ENCODE measurements at regions of chr7 and their contacts with region 1.

Region 1: DNA sequence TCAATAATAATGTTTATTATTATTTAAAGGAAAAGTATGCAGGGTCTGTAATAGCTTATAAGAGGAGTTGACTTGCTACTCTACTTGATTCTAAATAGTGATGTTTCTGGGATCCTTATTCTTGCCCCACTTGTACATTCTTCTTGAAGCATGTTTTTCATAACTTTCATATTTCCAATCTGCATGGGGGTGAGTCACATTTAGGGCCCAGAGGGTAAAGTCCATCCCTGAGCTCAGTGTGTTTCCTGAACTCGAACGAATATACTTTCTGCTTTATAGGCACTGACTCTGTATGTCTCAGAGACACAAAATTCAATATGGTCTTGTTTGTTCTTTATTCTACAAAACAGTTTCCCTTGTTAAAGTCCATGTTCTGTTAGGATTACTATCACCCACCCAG is 61.0 kb upstream of the SMIM30 start:
- DNase-seq: no peak
- ATAC-seq: no peak
- H3K4me3 ChIP-seq: no peak overlapping the region
- H3K27ac ChIP-seq: no peak overlapping the region
- H3K4me1 ChIP-seq: no peaks in the 10 kb centered on the region
- H3K27me3 ChIP-seq: no peaks in the 10 kb centered on the region
- CTCF ChIP-seq: no peak

Region 2: GRCh38 chr7:113086431-113086888 is 92.9 kb before region 1 on chr7 and contains the start of gene GPR85:
- intact Hi-C with region 1: no loop called
- DNase-seq: peak; percentile 40 to 64
- ATAC-seq: peak; percentile 90 to 97 (median 92)
- H3K4me3 ChIP-seq: peak within 1 kb of the TSS; percentile 14 to 64 (median 54)
- H3K27ac ChIP-seq: peak within 1 kb of the TSS in 5 of 10 donors; percentile 40 to 61 (median 54)
- H3K4me1 ChIP-seq: peaks cover 0 to 13% (median 0%) of the 10 kb centered on the region in 9 donors
- H3K27me3 ChIP-seq: peaks cover 0 to 39% (median 0%) of the 10 kb centered on the region in 7 donors
- CTCF ChIP-seq: no peak
- total RNA-seq, gene GPR85: 0.50 to 4.5 (median 1.2) TPM

Region 3: GRCh38 chr7:113128028-113128427 is 51.3 kb before region 1 on chr7:
- intact Hi-C with region 1: no loop called
- DNase-seq: no peak
- ATAC-seq: no peak
- H3K4me3 ChIP-seq: no peak overlapping the region
- H3K27ac ChIP-seq: no peak overlapping the region
- H3K4me1 ChIP-seq: no peaks in the 10 kb centered on the region
- H3K27me3 ChIP-seq: no peaks in the 10 kb centered on the region
- CTCF ChIP-seq: no peak

Region 4: DNA sequence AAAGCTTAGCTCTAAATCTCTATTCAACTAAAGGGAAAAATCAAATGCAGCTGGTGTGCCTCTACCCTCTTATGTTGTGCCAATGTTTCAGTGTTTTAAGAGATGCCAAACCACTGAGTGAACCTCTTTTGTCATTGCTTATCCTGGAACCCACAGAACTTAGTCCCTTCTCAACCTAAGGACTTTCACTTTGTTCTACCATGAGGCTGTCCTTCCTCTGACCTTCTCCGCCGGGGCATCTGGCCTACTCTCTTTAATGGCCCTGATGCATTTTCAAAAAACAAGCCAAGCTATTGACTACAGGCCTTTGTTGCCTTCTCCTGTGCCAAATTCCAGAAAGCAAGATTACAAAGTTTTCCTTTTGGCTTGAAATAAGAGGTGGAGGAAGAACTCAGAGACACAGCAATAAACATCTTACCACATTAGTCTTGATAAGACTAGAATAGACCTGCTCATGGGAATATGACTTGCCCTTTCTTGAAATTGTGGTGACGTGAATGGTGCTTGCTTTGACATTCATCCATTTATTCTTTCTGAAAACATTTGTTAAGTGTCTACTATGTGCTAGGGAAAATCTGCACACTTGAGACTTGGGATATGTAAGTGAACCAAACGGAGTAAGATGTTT is 192.2 kb after region 1 on chr7:
- intact Hi-C with region 1: no loop called
- DNase-seq: no peak
- ATAC-seq: peak in 1 of 8 donors; percentile 22
- H3K4me3 ChIP-seq: no peak overlapping the region
- H3K27ac ChIP-seq: no peak overlapping the region
- H3K4me1 ChIP-seq: no peaks in the 10 kb centered on the region
- H3K27me3 ChIP-seq: no peaks in the 10 kb centered on the region
- CTCF ChIP-seq: no peak

Region 5: GRCh38 chr7:113824117-113824823 is 645.0 kb after region 1 on chr7:
- intact Hi-C with region 1: no loop called
- DNase-seq: no peak
- ATAC-seq: peak in 6 of 8 donors; percentile 61 to 92 (median 80)
- H3K4me3 ChIP-seq: no peak overlapping the region
- H3K27ac ChIP-seq: peak overlapping the region in 5 of 10 donors; percentile 30 to 67 (median 32)
- H3K4me1 ChIP-seq: peaks cover 0 to 13% (median 0%) of the 10 kb centered on the region in 9 donors
- H3K27me3 ChIP-seq: no peaks in the 10 kb centered on the region
- CTCF ChIP-seq: no peak

Region 6: GRCh38 chr7:114130866-114131265 is 951.6 kb after region 1 on chr7:
- intact Hi-C with region 1: loop called in 1 of 10 experiments (anchors 5 kb)
- DNase-seq: no peak
- ATAC-seq: no peak
- H3K4me3 ChIP-seq: no peak overlapping the region
- H3K27ac ChIP-seq: no peak overlapping the region
- H3K4me1 ChIP-seq: no peaks in the 10 kb centered on the region
- H3K27me3 ChIP-seq: no peaks in the 10 kb centered on the region
- CTCF ChIP-seq: no peak